Activated T-helper 1 cell treated with anti-CD3 and anti-CD28 coated beads, Interleukin-12 subunit alpha, Interleukin-12 subunit beta, Interleukin-2, Interleukin-4 antibody, amounts not matched to agents 30 ng/mL and 10 ng/mL and 1 ng/mL, durations not matched to agents 14 hours and 24 hours and 36 hours (primary cell): ENCODE measurements at regions of chr5 and their contacts with region 1.

Region 1: DNA sequence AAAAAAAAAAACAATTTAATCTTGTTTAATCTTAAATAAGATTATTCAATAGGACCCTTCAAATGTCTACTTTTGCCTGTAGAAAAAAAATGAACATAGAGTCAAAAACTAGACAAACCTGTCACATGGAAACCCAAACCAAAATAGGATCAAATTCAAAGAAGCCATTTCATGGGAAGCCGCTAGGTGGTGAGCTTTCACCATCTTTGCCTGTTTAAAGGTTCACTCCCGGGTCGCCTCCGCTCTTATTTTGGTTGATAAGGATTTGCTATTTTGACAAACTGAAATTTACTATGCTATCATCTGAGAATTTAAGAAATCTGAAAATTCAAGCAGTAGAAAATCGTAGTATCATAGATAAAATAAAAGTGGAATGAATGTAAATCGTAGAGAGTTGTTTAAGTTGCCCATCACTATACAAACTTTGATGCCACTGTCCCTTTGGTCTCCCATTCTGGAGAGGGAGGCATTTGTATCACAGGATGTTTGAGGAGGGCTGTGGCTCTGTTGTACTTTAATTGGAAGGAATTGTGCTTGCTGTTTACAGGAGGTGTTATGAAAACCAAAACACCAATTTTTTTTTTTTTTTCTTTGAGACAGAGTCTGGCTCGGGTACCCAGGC is 43.5 kb upstream of the DNAH5 start:
- DNase-seq: no peak
- H3K4me3 Mint-ChIP-seq: no peak overlapping the region
- H3K27ac Mint-ChIP-seq: no peak overlapping the region
- H3K4me1 Mint-ChIP-seq: no peaks in the 10 kb centered on the region
- H3K27me3 Mint-ChIP-seq: peaks cover 11% of the 10 kb centered on the region

Region 2: GRCh38 chr5:13957032-13957645 is 30.8 kb before region 1 on chr5:
- intact Hi-C with region 1: no loop called
- DNase-seq: no peak
- H3K4me3 Mint-ChIP-seq: no peak overlapping the region
- H3K27ac Mint-ChIP-seq: no peak overlapping the region
- H3K4me1 Mint-ChIP-seq: no peaks in the 10 kb centered on the region
- H3K27me3 Mint-ChIP-seq: no peaks in the 10 kb centered on the region

Region 3: GRCh38 chr5:14174230-14174637 is 186.3 kb after region 1 on chr5:
- intact Hi-C with region 1: no loop called
- DNase-seq: no peak
- H3K4me3 Mint-ChIP-seq: no peak overlapping the region
- H3K27ac Mint-ChIP-seq: no peak overlapping the region
- H3K4me1 Mint-ChIP-seq: no peaks in the 10 kb centered on the region
- H3K27me3 Mint-ChIP-seq: peaks cover 6% of the 10 kb centered on the region

Region 4: GRCh38 chr5:14270209-14270702 is 282.3 kb after region 1 on chr5:
- intact Hi-C with region 1: loop called (anchors 1 kb)
- DNase-seq: no peak
- H3K4me3 Mint-ChIP-seq: no peak overlapping the region
- H3K27ac Mint-ChIP-seq: no peak overlapping the region
- H3K4me1 Mint-ChIP-seq: peaks cover 5% of the 10 kb centered on the region
- H3K27me3 Mint-ChIP-seq: peaks cover 3% of the 10 kb centered on the region

Region 5: DNA sequence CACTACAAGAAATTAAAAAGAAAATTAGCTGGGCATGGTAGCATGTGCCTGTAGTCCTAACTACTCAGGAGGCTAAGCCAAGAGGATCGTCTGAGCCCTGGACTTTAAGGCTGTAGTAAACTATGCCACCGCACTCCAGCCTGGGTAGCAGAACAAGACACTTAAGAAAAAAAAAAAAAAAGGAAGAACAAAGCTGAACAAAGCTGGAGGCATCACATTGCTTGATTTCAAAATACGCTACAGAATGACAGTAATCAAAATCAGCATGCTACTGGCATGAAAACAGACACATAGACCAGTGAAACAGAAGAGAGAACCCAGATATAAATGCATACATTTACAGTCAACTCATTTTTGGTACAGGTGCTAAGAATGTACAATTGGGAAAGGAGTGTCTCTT is 662.1 kb after region 1 on chr5:
- intact Hi-C with region 1: loop called (anchors 2 kb)
- DNase-seq: no peak
- H3K4me3 Mint-ChIP-seq: no peak overlapping the region
- H3K27ac Mint-ChIP-seq: no peak overlapping the region
- H3K4me1 Mint-ChIP-seq: peaks cover 2% of the 10 kb centered on the region
- H3K27me3 Mint-ChIP-seq: peaks cover 10% of the 10 kb centered on the region